Natural killer cell (primary cell): ENCODE measurements at regions of chr16 and their contacts with region 1.

Region 1: GRCh38 chr16:8173111-8173644 is 417.1 kb downstream of the TMEM114 start:
- DNase-seq: peak in 1 of 2 donors; percentile 5
- ATAC-seq: no peak
- H3K4me3 ChIP-seq: no peak overlapping the region
- H3K4me3 Mint-ChIP-seq: no peak overlapping the region
- H3K27ac ChIP-seq: no peak overlapping the region
- H3K27ac Mint-ChIP-seq: no peak overlapping the region
- H3K4me1 ChIP-seq: no peaks in the 10 kb centered on the region
- H3K4me1 Mint-ChIP-seq: no peaks in the 10 kb centered on the region
- H3K27me3 ChIP-seq: no peaks in the 10 kb centered on the region
- H3K27me3 Mint-ChIP-seq: no peaks in the 10 kb centered on the region
- CTCF ChIP-seq: peak; percentile 51

Region 2: DNA sequence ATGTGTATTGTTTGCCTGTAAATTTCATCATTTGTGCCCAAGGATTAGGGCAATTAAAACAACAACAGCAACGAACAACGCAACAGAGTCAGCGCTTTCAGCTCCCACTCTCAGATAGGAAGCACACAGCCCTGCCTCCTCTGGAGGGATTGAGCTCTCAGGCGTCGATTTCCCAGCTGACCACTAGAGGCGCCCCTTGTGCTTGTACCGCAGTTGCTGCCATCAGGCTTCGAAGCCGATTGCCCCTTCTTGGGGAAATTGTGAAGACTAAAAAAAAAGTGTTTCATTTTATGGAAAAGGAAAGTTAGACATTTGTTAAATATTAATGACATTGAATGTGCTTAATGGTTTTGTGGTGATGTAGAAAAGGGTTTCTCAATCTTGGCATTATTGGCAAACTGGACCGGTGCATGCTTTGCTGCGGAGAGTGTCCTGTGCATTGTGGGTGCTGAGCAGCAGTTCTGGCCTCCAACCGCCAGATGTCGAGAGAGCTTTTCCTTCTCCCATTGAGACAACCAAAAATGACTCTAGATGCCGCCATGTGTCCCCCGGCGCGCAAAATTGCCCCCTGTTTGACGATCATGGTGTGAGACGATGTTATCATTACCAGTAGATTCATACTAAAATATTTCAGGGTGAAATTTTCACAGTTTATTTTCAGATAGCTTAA is 1490.9 kb before region 1 on chr16:
- intact Hi-C with region 1: loop called (anchors 10 kb)
- DNase-seq: no peak
- ATAC-seq: peak in 1 of 3 donors; percentile 37
- H3K4me3 ChIP-seq: no peak overlapping the region
- H3K4me3 Mint-ChIP-seq: no peak overlapping the region
- H3K27ac ChIP-seq: no peak overlapping the region
- H3K27ac Mint-ChIP-seq: no peak overlapping the region
- H3K4me1 ChIP-seq: no peaks in the 10 kb centered on the region
- H3K4me1 Mint-ChIP-seq: peaks cover 0 to 5% of the 10 kb centered on the region in 2 donors
- H3K27me3 ChIP-seq: no peaks in the 10 kb centered on the region
- H3K27me3 Mint-ChIP-seq: no peaks in the 10 kb centered on the region
- CTCF ChIP-seq: no peak

Region 3: DNA sequence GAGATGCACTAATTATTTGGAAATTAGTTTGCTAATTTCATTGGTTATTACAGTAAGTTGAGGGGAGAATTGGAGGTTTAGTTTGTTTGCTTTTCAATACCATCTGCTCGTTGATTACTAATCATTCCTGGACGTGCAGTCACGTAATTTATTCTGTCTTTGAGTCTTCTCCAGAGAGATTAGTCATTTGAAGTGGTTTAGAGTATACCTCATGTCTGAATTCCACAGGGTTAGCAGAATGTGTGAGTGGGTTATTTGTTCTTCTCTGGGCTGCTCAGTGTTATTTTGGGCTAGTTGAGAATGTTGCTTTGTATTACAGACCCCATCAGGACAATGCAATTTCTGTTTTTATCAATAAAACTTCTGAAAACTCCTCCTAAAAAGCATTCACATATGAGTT is 575.5 kb before region 1 on chr16:
- intact Hi-C with region 1: no loop called
- DNase-seq: no peak
- ATAC-seq: no peak
- H3K4me3 ChIP-seq: no peak overlapping the region
- H3K4me3 Mint-ChIP-seq: no peak overlapping the region
- H3K27ac ChIP-seq: no peak overlapping the region
- H3K27ac Mint-ChIP-seq: no peak overlapping the region
- H3K4me1 ChIP-seq: no peaks in the 10 kb centered on the region
- H3K4me1 Mint-ChIP-seq: no peaks in the 10 kb centered on the region
- H3K27me3 ChIP-seq: no peaks in the 10 kb centered on the region
- H3K27me3 Mint-ChIP-seq: no peaks in the 10 kb centered on the region
- CTCF ChIP-seq: no peak

Region 4: DNA sequence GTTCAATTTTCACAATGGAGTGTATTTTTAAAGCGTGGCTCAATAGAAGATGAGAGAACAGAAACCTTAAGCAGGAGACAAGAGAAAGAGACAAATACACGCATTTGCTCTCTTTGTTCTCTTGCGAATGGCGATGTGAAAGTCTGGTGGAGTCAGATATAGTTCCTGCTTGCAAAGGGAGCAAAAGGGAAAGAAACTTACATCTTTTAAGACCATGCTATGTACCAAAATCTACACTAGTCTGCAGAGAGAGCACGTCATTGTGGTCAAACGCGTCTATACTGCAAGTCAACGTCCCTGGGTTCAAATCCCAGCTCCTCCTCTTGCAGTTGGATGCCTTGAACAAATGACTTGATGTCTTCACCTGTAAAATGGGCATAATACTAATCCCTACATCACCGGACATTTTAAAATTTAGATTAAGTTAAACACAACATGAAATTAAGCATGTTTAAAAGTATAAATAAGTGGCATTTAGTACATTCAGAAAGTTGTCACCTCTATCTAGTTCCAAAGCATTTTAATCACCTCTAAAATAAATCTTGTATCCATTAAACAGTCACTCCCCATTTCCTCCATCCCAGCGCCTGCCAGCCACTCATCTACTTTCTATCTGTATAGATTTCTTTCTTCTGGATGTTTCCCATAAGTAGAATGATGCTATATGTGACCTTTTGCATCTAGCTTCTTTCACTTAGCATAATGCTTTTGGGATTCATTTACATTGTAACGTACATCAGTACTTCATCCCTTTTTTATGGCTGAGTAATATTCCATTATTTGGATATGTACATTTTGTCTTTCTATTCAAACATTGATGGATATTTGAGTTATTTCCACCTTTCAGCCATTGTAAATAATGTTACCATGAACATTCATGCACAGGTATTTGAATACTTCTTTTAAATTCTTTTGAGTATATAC is 10.3 kb after region 1 on chr16:
- intact Hi-C with region 1: no loop called
- DNase-seq: no peak
- ATAC-seq: no peak
- H3K4me3 ChIP-seq: no peak overlapping the region
- H3K4me3 Mint-ChIP-seq: no peak overlapping the region
- H3K27ac ChIP-seq: no peak overlapping the region
- H3K27ac Mint-ChIP-seq: no peak overlapping the region
- H3K4me1 ChIP-seq: no peaks in the 10 kb centered on the region
- H3K4me1 Mint-ChIP-seq: no peaks in the 10 kb centered on the region
- H3K27me3 ChIP-seq: no peaks in the 10 kb centered on the region
- H3K27me3 Mint-ChIP-seq: peaks cover 0 to 3% of the 10 kb centered on the region in 2 donors
- CTCF ChIP-seq: no peak